ENCODE measurements at regions of chr2 and their contacts with region 1.

Region 1: GRCh38 chr2:26692279-26692896 is at the start of gene KCNK3:
- DNase-seq: peak; percentile 89
- H3K4me3 ChIP-seq: peak within 1 kb of the TSS; percentile 37 to 57 (median 50)
- H3K27ac ChIP-seq: peak within 1 kb of the TSS; percentile 79 to 91 (median 83)
- H3K4me1 ChIP-seq: peaks cover 0 to 31% (median 30%) of the 10 kb centered on the region in 4 donors
- H3K27me3 ChIP-seq: peaks cover 0 to 22% (median 7%) of the 10 kb centered on the region in 3 donors
- CTCF ChIP-seq: no peak
- EP300 ChIP-seq: no peak
- POLR2A ChIP-seq: no peak
- total RNA-seq, gene KCNK3: 2.9 to 12.2 (median 6.1) TPM

Region 2: DNA sequence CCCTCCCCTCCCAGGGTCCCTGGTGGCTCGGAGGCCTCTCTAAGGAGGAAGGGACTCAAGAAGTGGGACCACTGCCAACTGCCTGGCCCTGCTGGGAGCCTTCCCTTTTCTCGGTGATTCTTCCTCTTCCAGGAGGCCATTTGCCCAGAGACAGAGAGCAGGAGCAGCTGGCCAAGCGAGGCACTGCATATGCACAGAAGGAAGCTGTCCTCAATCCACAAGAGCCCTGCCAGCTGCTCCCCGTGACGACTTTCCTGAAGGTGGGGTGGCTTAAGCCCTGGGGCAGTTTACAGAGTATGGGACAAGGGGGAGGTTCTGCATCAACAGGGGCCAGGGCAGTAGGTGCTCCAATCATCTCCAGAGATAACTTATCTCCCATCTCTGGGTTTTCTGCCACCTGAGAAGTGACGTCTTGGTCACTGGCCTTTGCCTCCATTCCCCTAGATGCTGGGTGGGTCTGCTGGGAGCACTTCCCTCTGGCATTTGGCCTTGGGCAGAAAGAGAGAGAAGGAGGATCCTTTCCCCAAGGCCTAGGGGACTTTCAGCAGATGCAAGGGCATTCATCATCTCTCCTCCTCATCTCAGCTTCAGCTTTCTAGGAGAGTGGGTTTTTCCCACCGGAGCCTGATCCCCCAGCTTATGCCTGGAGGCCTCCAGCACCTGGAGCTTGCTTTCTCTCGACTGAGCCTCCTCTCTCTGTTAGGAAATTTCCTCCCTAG is 79.7 kb before region 1 on chr2:
- intact Hi-C with region 1: loop called (anchors 5 kb)
- DNase-seq: peak; percentile 78
- H3K4me3 ChIP-seq: no peak overlapping the region
- H3K27ac ChIP-seq: peak overlapping the region in 1 of 4 donors; percentile 1
- H3K4me1 ChIP-seq: peaks cover 0 to 26% (median 20%) of the 10 kb centered on the region in 4 donors
- H3K27me3 ChIP-seq: peaks cover 0 to 6% (median 0%) of the 10 kb centered on the region in 3 donors
- CTCF ChIP-seq: no peak
- EP300 ChIP-seq: no peak
- POLR2A ChIP-seq: no peak

Region 3: DNA sequence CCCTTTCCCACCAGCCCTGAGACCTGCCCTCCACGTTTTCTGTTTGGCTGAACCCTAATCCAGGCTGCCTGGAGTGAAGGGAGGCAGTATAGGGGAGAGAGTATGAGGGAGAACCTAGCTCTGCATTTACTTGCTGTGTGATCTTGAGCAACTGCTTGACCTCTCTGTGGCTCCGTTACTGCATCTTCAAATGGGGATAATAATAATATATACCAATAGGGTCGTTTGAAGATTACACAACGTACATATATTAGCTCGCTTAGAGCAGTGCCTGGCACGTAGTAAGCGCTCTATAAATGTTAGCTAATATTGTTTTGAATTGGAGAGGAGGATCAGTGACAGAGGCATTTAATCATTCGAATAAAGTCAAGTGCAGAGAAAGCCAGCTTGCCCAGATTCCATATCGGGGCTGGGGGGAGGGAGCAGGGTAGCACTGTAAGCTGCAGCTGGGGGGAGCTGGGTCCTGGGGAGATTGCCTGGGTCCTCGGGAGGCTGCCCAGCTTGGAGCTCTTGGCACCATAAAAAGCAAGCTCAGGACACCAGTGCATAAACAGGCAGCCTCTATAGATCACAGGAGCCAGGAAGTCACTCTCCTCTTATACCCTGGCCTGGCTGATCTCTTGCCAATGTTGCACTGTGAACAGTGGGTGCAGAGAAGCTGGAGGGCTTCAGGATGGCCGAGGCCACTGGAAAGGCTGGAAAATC is 19.2 kb after region 1 on chr2:
- intact Hi-C with region 1: loop called (anchors 2 kb)
- DNase-seq: peak; percentile 93
- H3K4me3 ChIP-seq: no peak overlapping the region
- H3K27ac ChIP-seq: peak overlapping the region; percentile 49 to 85 (median 73)
- H3K4me1 ChIP-seq: peaks cover 0 to 62% (median 47%) of the 10 kb centered on the region in 4 donors
- H3K27me3 ChIP-seq: no peaks in the 10 kb centered on the region
- CTCF ChIP-seq: no peak
- EP300 ChIP-seq: peak in 2 of 4 donors; percentile 10 to 35
- POLR2A ChIP-seq: no peak

Region 4: GRCh38 chr2:26724004-26724750 is 31.8 kb after region 1 on chr2:
- intact Hi-C with region 1: loop called (anchors 2 kb)
- DNase-seq: peak; percentile 86
- H3K4me3 ChIP-seq: no peak overlapping the region
- H3K27ac ChIP-seq: peak overlapping the region; percentile 0 to 75 (median 41)
- H3K4me1 ChIP-seq: peaks cover 0 to 59% (median 53%) of the 10 kb centered on the region in 4 donors
- H3K27me3 ChIP-seq: no peaks in the 10 kb centered on the region
- CTCF ChIP-seq: no peak
- EP300 ChIP-seq: no peak
- POLR2A ChIP-seq: no peak

Region 5: DNA sequence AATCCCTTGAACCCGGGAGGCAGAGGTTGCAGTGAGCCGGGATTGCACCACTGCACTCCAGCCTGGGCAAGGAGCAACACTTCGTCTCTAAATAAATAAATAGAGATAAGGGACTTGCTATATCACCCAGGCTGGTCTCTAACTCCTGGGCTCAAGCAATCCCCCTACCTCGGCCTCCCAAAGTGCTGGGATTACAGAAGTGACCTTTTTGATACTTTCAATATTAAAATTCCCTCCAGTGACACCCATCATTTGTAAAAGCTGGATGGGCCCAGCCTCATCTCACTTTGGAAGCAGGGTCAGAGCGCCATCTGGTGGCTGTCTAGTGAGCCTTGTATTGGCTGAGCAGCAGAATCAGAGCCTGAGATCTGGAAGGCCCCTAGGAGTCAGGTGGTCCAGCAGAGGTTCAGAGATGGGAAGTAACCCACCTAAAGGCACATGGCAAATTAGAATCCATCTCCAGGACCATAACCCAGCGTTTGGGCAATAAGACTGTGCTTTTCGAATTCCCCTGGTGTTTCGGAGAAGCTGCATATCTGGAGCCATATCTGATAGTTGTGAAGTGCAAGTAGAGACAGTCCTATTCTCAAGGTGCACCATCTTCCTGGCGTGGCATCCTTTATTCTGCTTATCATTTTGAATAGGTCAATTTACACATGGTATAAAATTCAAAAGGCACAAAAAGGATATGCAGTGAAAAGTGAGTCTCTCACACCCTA is 53.4 kb after region 1 on chr2:
- intact Hi-C with region 1: loop called (anchors 5 kb)
- DNase-seq: peak; percentile 90
- H3K4me3 ChIP-seq: no peak overlapping the region
- H3K27ac ChIP-seq: no peak overlapping the region
- H3K4me1 ChIP-seq: peaks cover 0 to 3% (median 0%) of the 10 kb centered on the region in 4 donors
- H3K27me3 ChIP-seq: no peaks in the 10 kb centered on the region
- CTCF ChIP-seq: peak; percentile 83 to 93 (median 90)
- EP300 ChIP-seq: no peak
- POLR2A ChIP-seq: no peak